Naive thymus-derived CD8-positive, alpha-beta T cell (primary cell): ENCODE measurements at regions of chr13 and their contacts with region 1.

Region 1: DNA sequence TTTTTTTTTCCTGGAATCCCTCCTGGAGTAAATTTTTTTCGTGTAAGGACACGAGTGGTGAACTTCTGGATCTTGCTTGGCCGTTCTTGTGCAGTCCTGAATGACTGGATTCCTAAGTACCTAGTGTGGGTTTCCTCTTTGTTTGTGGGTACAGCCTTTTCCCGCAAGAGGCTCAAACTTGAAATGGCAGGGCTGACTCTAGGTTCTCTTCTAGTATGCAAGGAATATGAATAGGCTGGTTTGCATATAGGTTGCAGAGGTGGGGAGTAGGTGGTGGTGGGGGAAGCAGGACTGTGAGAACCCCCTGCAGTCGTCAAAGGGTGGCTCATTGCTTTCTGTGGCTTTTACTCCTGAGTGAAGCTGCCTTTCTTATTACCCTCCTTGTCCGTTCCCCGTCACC is 13.6 kb downstream of the UBAC2 start:
- DNase-seq: peak in 6 of 10 donors; percentile 33 to 73 (median 54)
- ATAC-seq: peak; percentile 31 to 32
- H3K4me3 Mint-ChIP-seq: peak overlapping the region; percentile 59 to 98 (median 93)
- H3K27ac Mint-ChIP-seq: peak overlapping the region; percentile 84 to 100 (median 99)
- H3K4me1 Mint-ChIP-seq: peaks cover 46 to 88% (median 85%) of the 10 kb centered on the region in 4 donors
- H3K27me3 Mint-ChIP-seq: no peaks in the 10 kb centered on the region

Region 2: DNA sequence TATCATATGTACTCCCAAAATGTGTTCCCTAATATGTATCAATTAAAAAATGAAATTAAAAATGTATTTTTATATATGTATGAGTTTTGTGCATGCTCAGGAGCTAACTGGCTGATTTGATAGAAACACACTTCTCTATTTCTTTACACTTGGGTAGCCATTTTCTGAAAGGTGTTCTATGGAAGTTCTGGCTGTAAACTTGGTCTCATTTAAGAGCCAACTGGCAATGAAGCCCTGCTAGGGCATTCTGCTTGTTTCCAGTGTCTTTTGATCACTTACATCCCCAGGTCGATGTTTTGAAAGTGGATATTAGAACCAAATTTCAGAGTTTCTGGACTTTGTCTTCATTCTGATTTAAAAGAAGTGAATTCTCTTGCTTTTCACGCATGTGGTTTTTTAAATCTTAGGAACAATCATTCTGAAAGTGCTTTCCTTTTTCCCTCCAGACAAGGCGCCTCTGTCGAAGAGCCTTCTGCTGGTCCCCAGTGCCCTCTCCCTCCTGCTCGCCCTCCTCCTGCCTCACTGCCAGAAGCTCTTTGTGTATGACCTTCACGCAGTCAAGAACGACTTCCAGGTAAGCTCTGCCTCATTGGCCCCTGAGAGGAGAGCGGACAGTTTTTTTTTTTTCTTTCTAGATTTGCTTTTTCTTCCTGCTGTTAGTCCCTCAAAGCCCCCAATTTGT is 23.9 kb after region 1 on chr13:
- POLR2A ChIA-PET with region 1: interaction called, 39 read pairs
- DNase-seq: peak in 2 of 10 donors; percentile 27 to 41
- ATAC-seq: peak; percentile 81 to 85
- H3K4me3 Mint-ChIP-seq: peak overlapping the region; percentile 77 to 89 (median 86)
- H3K27ac Mint-ChIP-seq: peak overlapping the region; percentile 94 to 100 (median 97)
- H3K4me1 Mint-ChIP-seq: peaks cover 39 to 72% (median 70%) of the 10 kb centered on the region in 4 donors
- H3K27me3 Mint-ChIP-seq: no peaks in the 10 kb centered on the region

Region 3: DNA sequence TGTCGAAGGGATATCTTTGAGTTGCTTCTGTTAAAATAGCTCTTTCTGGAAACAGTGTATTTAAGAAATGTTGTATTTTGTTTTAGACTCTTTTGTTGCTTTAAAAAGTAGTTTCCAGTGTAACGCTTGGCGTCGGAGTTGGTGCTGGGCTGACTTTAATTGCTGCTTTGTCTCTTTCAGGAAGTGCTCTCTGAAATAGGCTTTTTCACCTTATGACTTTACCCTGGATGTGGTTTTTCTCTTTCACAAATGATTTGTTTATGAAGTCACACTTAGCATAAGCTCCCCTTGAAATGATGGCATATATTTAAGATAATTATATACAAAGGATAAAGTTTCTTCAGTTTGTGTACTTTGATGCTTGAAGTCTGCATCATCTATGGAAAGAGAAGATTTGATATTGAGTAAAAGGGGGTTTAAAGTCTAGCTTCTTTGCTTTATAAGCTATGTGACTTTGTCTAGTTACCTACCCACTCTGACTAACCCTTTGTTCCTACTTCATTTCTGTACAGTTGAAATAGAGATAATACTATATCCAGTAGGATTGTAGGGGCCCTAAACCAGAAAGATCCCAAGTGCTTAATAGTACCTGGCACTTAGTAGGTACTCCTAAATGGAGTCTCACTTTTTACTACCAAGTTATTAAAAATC is 44.1 kb after region 1 on chr13 and contains the start of gene GPR18:
- POLR2A ChIA-PET with region 1: interaction called, 231 read pairs
- DNase-seq: peak in 6 of 10 donors; percentile 17 to 78 (median 63)
- ATAC-seq: peak; percentile 74 to 81
- H3K4me3 Mint-ChIP-seq: peak within 1 kb of the TSS; percentile 87 to 98 (median 94)
- H3K27ac Mint-ChIP-seq: peak within 1 kb of the TSS; percentile 90 to 99 (median 98)
- H3K4me1 Mint-ChIP-seq: peaks cover 29 to 87% (median 74%) of the 10 kb centered on the region in 4 donors
- H3K27me3 Mint-ChIP-seq: no peaks in the 10 kb centered on the region
- polyA plus RNA-seq, gene GPR18: 22.2 to 37.0 (median 26.1) TPM

Region 4: DNA sequence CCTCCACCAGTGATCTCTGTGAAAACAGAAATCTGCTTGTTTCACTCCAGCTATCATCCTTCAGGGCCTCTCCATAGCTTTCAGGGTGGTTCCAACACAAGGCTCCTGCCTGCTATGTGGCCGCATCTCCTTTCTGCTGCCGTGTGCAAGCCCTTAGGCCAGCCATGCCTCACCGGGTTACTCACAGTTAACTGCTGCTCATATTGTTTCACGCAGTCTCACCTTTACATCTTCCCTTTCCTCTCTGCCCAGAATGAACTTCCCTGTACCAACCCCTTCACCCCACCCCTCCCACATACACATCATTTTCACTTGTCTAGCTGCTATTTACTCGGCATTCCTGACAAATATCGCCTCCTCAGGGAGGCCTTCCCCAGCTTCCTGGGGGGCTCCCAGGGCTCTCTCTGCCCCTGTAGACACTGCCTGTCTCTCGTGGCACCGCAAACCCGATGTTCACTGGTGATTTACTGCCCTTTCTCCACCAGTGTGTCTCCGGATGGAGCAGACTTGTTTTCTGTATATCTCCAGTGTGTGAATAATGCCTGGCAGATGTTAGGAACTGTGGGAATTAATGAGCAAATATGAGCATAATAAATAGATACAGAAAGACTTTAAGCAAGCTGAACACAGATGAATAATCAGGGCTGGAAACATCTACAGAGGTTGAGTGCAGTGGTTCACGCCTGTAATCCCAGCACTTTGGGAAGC is 132.3 kb after region 1 on chr13:
- POLR2A ChIA-PET with region 1: no interaction called
- DNase-seq: no peak
- ATAC-seq: no peak
- H3K4me3 Mint-ChIP-seq: peak overlapping the region in 2 of 10 donors; percentile 27 to 51
- H3K27ac Mint-ChIP-seq: peak overlapping the region; percentile 79 to 96 (median 88)
- H3K4me1 Mint-ChIP-seq: peaks cover 41 to 77% (median 72%) of the 10 kb centered on the region in 4 donors
- H3K27me3 Mint-ChIP-seq: no peaks in the 10 kb centered on the region